ENCODE measurements at regions of chr14 and their contacts with region 1.

Region 1: GRCh38 chr14:74618078-74618952 is 6.3 kb upstream of the LTBP2 start:
- DNase-seq: no peak
- ATAC-seq: peak in 2 of 8 donors; percentile 25 to 32
- H3K4me3 ChIP-seq: peak overlapping the region in 1 of 10 donors; percentile 6
- H3K27ac ChIP-seq: peak overlapping the region; percentile 42 to 88 (median 67)
- H3K4me1 ChIP-seq: peaks cover 8 to 86% (median 36%) of the 10 kb centered on the region in 9 donors
- H3K27me3 ChIP-seq: peaks cover 0 to 22% (median 4%) of the 10 kb centered on the region in 7 donors
- CTCF ChIP-seq: no peak

Region 2: GRCh38 chr14:74501135-74501614 is 117.1 kb before region 1 on chr14:
- intact Hi-C with region 1: loop called in 2 of 10 experiments (anchors 5 to 10 kb)
- DNase-seq: peak; percentile 58 to 66
- ATAC-seq: peak; percentile 38 to 77 (median 62)
- H3K4me3 ChIP-seq: no peak overlapping the region
- H3K27ac ChIP-seq: no peak overlapping the region
- H3K4me1 ChIP-seq: peaks cover 0 to 15% (median 0%) of the 10 kb centered on the region in 9 donors
- H3K27me3 ChIP-seq: no peaks in the 10 kb centered on the region
- CTCF ChIP-seq: peak; percentile 21 to 67 (median 60)

Region 3: GRCh38 chr14:74667758-74668157 is 49.4 kb after region 1 on chr14:
- intact Hi-C with region 1: loop called in 2 of 10 experiments (anchors 5 kb)
- DNase-seq: no peak
- ATAC-seq: no peak
- H3K4me3 ChIP-seq: no peak overlapping the region
- H3K27ac ChIP-seq: no peak overlapping the region
- H3K4me1 ChIP-seq: peaks cover 0 to 18% (median 12%) of the 10 kb centered on the region in 9 donors
- H3K27me3 ChIP-seq: no peaks in the 10 kb centered on the region
- CTCF ChIP-seq: no peak

Region 4: GRCh38 chr14:74712499-74713394 is 94.4 kb after region 1 on chr14 and contains the starts of genes AREL1 and FCF1:
- intact Hi-C with region 1: loop called in 2 of 10 experiments (anchors 5 kb)
- DNase-seq: peak; percentile 68 to 90
- ATAC-seq: peak; percentile 97 to 100 (median 99)
- H3K4me3 ChIP-seq: peak within 1 kb of the TSS; percentile 65 to 93 (median 82)
- H3K27ac ChIP-seq: peak within 1 kb of the TSS in 9 of 10 donors; percentile 70 to 90 (median 86)
- H3K4me1 ChIP-seq: peaks cover 0 to 53% (median 37%) of the 10 kb centered on the region in 9 donors
- H3K27me3 ChIP-seq: no peaks in the 10 kb centered on the region
- CTCF ChIP-seq: no peak
- total RNA-seq, gene AREL1: 18.1 to 27.2 (median 20.9) TPM
- total RNA-seq, gene FCF1: 31.7 to 45.5 (median 37.2) TPM

Measured in heart right ventricle (tissue), 16 donors.